Upper lobe of right lung (tissue), 1 donor: ENCODE measurements at regions of chr1 and their contacts with region 1.

Region 1: DNA sequence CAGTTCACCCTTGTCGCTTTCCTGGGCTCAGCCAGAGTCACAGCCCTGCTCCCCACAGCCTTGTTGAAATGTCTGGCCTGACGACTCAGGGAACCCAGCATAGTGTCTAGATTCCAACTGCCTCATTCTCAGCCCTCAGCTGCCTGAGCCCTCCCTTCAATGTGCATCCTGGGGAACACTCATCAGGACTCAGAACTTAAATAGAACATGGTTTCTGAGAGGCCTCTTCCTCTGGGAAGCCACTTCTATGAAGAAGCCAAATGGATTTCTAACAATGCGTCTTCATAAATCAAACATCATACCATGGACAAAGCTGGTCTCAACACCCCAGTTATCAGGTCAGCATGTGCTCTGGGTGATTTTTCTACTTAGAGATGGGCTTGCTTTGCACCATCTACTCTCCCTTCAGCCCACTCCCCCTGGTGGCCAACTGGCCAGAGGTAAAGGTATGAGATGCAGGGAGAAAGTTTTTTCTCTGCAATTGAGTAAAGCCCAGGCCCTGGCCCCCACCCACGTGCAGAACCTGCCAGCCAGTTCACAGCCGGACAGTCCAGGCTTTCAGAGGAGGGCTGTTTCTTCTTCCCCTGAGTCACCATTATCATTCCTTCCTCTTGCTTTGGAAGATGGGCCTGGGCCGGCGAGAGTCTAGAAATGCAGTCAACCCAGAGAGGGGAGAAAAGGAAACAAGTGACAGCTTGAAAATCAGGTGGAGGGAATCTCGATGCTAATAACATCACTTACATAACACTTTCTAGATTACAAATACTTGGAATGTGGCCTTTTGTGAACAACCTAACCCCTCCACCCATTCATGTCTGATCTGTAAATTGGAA is 32.1 kb downstream of the CD244 start:
- DNase-seq: peak; percentile 87
- ATAC-seq: peak; percentile 73
- H3K4me3 ChIP-seq: no peak overlapping the region
- H3K27ac ChIP-seq: no peak overlapping the region
- H3K4me1 ChIP-seq: no peaks in the 10 kb centered on the region
- H3K27me3 ChIP-seq: no peaks in the 10 kb centered on the region
- CTCF ChIP-seq: peak; percentile 58

Region 2: DNA sequence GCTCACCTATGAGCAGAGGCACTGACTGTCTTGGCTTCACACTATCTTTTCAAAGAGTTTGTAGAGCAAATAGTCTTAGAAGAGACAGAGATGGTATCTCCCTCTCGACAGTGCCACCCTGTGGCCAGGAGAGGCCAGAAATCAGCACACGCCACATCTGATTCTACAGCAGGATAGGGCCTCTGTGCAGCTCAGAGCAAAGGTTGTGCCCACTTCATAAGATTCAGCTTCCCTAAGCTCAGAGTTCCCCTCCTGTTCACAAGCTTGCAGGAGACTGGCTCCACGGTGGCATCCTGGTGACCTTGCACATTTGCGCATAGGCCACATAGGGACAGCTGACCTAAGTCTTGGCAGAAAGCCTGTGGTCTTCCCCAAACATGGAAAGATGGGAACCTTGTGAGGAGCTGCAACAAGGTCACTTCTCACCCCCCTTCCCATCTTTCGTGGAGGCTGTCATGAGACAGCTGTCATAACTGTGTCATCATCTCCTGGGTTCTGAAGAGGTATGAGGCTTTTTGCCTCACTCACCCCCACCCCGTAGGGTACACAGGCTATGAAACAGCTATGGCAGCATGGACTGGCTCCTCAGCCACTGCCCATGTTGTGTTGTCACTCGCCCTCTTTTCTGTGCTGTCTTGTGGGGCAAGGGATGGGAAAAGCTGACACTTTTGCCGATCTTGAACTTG is 121.0 kb after region 1 on chr1:
- intact Hi-C with region 1: loop called (anchors 10 kb)
- DNase-seq: peak; percentile 78
- ATAC-seq: peak; percentile 92
- H3K4me3 ChIP-seq: peak overlapping the region; percentile 29
- H3K27ac ChIP-seq: no peak overlapping the region
- H3K4me1 ChIP-seq: no peaks in the 10 kb centered on the region
- H3K27me3 ChIP-seq: no peaks in the 10 kb centered on the region
- CTCF ChIP-seq: peak; percentile 72